Activated T-helper 2 cell treated with anti-CD3 and anti-CD28 coated beads, Interferon-gamma antibody, Interleukin-2, Interleukin-4, amounts not matched to agents 10 μg/mL and 5 μg/mL and 100 μg/mL, durations not matched to agents 14 hours and 24 hours and 36 hours (primary cell): ENCODE measurements at regions of chr2 and their contacts with region 1.

Region 1: GRCh38 chr2:65396348-65397026 is 35.9 kb downstream of the SPRED2 start:
- DNase-seq: no peak
- H3K4me3 Mint-ChIP-seq: no peak overlapping the region
- H3K27ac Mint-ChIP-seq: no peak overlapping the region
- H3K4me1 Mint-ChIP-seq: peaks cover 33% of the 10 kb centered on the region
- H3K27me3 Mint-ChIP-seq: peaks cover 12% of the 10 kb centered on the region

Region 2: GRCh38 chr2:65548576-65549256 is 152.2 kb after region 1 on chr2:
- intact Hi-C with region 1: loop called (anchors 1 kb)
- DNase-seq: no peak
- H3K4me3 Mint-ChIP-seq: no peak overlapping the region
- H3K27ac Mint-ChIP-seq: no peak overlapping the region
- H3K4me1 Mint-ChIP-seq: peaks cover 21% of the 10 kb centered on the region
- H3K27me3 Mint-ChIP-seq: peaks cover 11% of the 10 kb centered on the region